Posterior cingulate gyrus (tissue), 11 donors: ENCODE measurements at regions of chr4 and their contacts with region 1.

Region 1: DNA sequence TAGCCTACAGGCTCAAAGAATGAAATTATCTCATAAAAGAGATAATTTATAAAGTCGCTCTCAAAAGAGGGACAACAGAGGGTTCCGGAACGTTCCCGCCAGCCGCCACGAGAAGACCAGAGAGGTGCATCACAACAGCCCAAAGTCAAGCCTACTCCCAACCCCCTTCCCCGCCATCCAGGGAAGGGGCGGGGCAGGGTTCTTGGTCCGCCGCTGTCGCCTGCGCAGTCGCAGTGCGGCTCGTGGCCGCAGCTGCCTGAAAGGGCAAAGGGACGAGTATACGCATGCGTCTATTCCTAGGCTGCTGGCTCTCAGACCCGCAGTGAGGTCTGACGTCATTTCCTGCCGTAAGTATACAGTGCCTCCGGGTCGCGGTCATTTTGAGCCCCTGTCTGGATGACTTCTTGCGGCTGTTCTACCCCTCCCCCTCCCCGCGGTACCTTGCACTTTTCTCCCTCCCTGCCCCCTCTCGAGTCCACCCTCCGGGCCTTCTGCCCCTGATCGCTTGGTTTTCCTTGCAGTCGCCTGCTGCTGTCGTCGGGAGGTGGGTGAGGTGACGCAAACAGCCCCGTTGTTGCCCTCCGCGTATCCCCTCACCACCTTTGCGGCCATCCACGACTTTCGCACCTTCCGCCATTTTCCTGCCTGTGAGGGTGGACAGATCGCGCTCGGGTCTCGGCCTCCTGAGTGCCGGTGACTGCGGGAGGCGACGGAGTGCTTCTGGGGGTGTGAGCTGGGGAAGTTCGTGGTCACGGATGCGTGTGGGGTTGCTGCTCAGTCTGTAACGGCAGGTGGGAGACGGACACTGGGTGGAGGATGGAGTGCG is at the start of gene OCIAD1:
- DNase-seq: peak; percentile 94 to 99 (median 98)

Region 2: DNA sequence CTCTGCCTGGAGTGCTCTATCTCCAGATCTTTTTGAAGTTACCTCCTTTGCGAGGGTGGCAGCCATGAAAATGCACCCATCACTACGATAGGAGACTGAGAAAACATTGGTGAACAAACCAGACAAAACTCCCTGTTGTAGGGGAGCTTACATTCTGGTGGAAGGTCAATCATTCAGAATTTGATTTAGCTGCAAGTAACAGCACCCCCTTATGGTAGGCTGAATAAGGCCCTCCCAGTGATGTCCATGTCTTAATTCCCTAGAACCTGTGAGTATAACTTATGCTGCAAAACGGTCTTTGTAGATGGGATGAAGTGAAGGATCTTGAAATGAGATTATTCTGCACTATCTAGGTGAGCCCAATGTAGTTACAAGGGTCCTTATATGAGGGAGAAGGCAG is 555.7 kb before region 1 on chr4:
- intact Hi-C with region 1: no loop called
- DNase-seq: no peak

Region 3: DNA sequence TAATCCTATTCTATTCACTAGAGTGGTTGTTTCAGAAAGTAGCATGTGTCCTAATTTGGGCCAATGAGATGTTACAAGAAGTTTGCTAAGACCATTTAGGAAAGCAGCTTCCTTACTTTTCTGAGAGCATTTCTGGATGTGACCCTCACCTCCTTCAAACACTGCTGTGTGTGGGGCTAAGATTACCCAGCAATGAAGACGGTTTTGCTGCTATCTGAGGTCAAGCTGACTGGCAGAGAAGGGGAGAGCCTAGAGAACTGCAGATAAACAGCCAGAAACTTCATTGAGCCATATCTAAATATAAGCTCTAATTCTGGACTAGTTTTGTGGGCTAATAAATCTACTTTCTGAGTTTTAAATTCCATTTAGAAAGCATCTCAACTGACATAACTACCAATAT is 304.5 kb before region 1 on chr4:
- intact Hi-C with region 1: no loop called
- DNase-seq: no peak

Region 4: DNA sequence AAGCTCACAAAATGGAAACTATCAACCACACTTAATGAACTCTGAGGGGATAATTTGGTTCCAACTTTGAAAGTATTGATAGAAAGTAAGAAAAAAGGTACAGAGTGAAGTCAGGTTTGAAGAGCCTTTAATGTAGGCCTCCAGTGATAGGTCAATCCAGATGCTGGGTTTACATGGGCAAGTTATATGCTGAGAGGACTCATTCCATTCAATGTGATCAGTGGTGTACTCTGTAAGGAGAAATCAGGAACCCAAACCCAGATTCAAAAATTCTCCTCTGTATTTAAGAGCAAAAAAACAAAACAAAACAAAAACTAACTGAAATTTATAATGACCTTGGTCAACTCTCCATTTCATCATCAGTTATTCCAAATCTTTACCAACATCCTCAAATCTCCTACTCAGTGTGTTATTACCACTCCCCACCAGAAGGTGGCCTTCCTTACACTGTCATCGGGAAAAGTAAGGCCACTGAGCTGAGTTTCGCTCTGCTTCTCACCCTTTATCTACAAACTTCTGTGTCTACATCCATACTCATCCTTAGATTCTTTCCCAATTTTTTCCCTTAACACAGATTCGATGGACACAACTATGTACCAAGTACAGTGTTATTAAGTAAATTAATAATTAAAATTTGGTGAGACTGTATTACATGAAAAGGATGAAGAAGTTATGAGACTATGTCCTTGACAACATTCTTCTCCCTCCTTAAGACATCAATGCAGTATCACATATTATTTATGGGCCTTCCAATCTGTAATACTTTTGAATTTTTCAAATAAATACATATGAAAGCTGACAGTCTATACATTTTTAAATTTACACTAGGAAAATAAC is 252.6 kb before region 1 on chr4:
- intact Hi-C with region 1: loop called (anchors 5 kb)
- DNase-seq: peak in 5 of 10 donors; percentile 18 to 66 (median 51)

Region 5: GRCh38 chr4:48635310-48635709 is 195.6 kb before region 1 on chr4:
- intact Hi-C with region 1: no loop called
- DNase-seq: peak in 1 of 10 donors; percentile 18

Region 6: GRCh38 chr4:48792348-48793006 is 38.4 kb before region 1 on chr4:
- intact Hi-C with region 1: loop called (anchors 5 kb)
- DNase-seq: no peak